Posterior vena cava (tissue), 2 donors: ENCODE measurements at regions of chr2 and their contacts with region 1.

Region 1: DNA sequence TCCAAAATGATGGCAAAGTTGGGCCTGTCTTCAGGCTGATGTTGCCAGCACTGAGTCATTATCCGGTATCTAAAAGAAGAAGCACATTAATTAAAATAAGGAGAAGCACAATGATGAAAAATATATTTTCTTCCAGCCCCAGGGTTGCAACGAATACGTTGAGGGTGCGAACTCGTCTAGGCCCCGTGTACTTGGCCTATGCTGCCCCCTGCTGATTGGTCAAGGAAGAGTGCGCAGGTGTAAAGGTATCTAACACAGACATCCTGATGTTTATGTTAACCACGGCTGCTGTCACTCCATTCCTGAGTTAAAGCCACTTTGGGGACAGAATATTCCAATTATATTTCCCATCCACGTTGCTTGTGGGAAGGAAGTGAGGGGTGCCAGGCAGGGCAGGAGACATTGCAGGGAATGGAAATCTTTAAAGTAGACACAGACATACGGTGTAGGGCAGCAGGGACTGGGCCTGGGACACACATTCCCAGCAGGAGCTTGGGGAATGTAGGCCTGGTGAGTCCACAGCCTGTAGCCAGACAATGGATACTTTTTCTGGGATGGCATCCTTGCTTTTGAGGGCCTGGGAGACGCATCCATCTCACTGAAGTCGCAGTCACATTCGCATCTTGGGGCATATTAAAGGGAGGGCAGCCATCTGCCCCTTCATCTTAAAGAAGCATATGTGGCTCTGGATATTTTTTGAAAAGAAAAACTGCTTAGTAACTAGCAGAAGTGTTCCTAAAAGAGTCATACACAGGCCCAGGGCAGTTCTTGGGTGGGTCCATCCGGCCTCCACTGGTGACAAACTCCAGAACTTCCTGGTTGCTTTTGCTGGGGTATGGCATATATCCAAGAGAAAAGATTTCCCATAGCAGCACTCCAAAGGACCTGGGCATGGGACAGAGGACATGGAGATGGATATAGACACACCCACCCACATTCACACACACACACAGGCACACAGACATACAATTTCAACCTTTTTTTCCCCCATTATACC is 81.9 kb downstream of the CLIP4 start:
- DNase-seq: no peak

Region 2: DNA sequence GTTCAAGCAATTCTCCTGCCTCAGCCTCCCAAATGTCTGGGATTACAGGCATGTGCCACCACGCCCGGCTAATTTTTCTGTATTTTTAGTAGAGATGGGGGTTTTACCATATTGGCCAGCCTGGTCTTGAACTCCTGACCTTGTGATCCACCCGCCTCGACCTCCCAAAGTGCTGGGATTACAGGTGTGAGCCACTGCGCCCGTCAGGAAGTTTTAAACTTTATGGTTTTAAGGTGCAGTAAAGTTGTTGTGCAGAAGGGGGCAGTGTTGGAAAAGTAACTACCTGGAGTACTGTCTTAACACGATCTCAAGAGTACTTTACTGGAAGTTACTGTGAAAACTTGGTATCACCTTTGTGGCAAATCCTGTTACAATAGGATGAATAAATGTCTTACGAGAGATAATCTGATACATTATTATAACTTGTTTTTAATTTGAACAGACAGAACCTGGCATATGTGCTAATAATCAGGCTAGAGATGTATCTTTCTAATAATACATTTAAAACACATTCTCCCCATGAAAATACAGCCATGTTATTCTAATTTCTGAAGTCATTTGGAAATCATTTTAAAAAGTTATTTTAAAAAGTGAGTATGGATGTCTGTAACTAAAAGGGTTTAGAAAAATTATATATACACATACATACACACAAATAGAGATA is 375.7 kb before region 1 on chr2:
- intact Hi-C with region 1: loop called in 1 of 2 experiments (anchors 5 kb)
- DNase-seq: no peak

Region 3: GRCh38 chr2:28958689-28959088 is 238.4 kb before region 1 on chr2:
- intact Hi-C with region 1: loop called (anchors 2 to 5 kb)
- DNase-seq: no peak